ENCODE measurements at regions of chr12 and their contacts with region 1.

Region 1: DNA sequence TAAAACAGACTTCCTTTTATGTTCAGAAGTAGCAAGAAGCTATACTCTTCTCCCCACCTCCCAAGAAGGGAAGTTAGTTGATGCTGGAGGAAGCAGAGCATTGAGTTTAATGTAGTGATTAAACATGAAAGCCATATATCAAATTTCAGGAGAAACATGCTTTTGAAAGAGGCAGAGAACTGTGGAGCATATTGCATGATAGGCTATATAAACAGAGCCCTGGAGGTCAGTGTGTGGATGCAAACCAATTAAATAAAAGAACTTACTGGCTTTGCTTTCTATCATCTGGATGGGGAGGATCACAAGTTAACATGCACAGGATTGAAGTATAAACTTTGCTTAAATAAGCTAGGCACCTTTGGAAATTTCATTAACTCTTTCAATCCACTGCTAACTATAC is 94.1 kb downstream of the MSRB3 start:
- DNase-seq: no peak
- H3K4me3 ChIP-seq: no peak overlapping the region
- H3K27ac ChIP-seq: no peak overlapping the region
- H3K4me1 ChIP-seq: no peaks in the 10 kb centered on the region
- H3K27me3 ChIP-seq: no peaks in the 10 kb centered on the region
- CTCF ChIP-seq: no peak
- POLR2A ChIP-seq: no peak

Region 2: GRCh38 chr12:64494998-64495729 is 877.4 kb before region 1 on chr12:
- intact Hi-C with region 1: no loop called
- DNase-seq: no peak
- H3K4me3 ChIP-seq: no peak overlapping the region
- H3K27ac ChIP-seq: no peak overlapping the region
- H3K4me1 ChIP-seq: no peaks in the 10 kb centered on the region
- H3K27me3 ChIP-seq: no peaks in the 10 kb centered on the region
- CTCF ChIP-seq: no peak
- POLR2A ChIP-seq: no peak

Region 3: GRCh38 chr12:65279369-65280112 is 93.0 kb before region 1 on chr12:
- intact Hi-C with region 1: loop called (anchors 5 kb)
- DNase-seq: no peak
- H3K4me3 ChIP-seq: peak overlapping the region; percentile 87 to 92
- H3K27ac ChIP-seq: peak overlapping the region; percentile 86
- H3K4me1 ChIP-seq: peaks cover 19% of the 10 kb centered on the region
- H3K27me3 ChIP-seq: no peaks in the 10 kb centered on the region
- CTCF ChIP-seq: no peak
- POLR2A ChIP-seq: no peak

Region 4: GRCh38 chr12:65649126-65649525 is 276.6 kb after region 1 on chr12:
- intact Hi-C with region 1: no loop called
- DNase-seq: no peak
- H3K4me3 ChIP-seq: no peak overlapping the region
- H3K27ac ChIP-seq: no peak overlapping the region
- H3K4me1 ChIP-seq: no peaks in the 10 kb centered on the region
- H3K27me3 ChIP-seq: no peaks in the 10 kb centered on the region
- CTCF ChIP-seq: no peak
- POLR2A ChIP-seq: no peak